ENCODE measurements at regions of chr1 and their contacts with region 1.

Region 1: GRCh38 chr1:145978854-145979759 is 14.6 kb downstream of the POLR3GL start:
- DNase-seq: peak; percentile 93
- ATAC-seq: peak; percentile 87
- H3K4me3 ChIP-seq: peak overlapping the region; percentile 16 to 52 (median 40)
- H3K4me3 Mint-ChIP-seq: no peak overlapping the region
- H3K27ac ChIP-seq: peak overlapping the region; percentile 96 to 97
- H3K27ac Mint-ChIP-seq: no peak overlapping the region
- H3K4me1 ChIP-seq: peaks cover 70 to 71% of the 10 kb centered on the region in 2 donors
- H3K4me1 Mint-ChIP-seq: peaks cover 30% of the 10 kb centered on the region
- H3K27me3 ChIP-seq: no peaks in the 10 kb centered on the region
- H3K27me3 Mint-ChIP-seq: no peaks in the 10 kb centered on the region
- CTCF ChIP-seq: no peak

Region 2: DNA sequence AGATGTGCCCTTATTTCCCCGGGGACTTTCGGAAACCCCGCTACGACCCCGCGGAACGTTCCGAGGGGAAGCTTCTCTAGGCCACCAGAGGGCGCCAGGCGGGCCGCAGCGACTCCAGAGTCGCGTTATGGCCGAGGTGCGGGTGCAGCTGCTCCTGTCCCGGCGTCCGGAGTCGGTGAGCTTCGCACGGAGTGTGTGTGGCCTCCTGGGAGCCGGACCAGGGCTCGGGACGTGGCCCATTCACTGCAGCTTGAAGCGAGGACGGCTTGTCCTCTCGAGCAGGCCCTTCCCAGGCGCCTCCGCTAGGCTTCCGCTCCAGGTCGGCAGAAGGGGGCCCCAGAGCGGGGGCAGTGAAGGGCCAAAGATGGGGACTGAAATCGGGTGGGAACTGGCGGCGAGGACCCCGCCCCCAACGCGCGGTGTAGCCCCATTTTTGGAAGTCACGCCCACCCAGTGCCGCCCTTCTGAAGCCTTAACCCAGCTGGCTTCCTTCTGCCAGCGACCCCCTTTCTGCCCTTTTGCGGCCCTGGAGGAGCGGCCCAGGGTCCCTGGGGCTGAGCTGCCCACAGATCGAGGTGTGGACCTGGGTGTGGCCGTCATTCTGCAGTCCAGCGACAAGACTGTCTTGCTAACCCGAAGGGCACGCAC is 133.5 kb before region 1 on chr1 and contains the start of gene NUDT17:
- CTCF ChIA-PET with region 1: interaction called, 68 read pairs
- POLR2A ChIA-PET with region 1: no interaction called
- intact Hi-C with region 1: loop called (anchors 1 kb)
- DNase-seq: peak; percentile 91
- ATAC-seq: peak; percentile 72
- H3K4me3 ChIP-seq: peak within 1 kb of the TSS; percentile 57 to 85 (median 70)
- H3K4me3 Mint-ChIP-seq: no peak within 1 kb of the TSS
- H3K27ac ChIP-seq: peak within 1 kb of the TSS; percentile 73 to 76
- H3K27ac Mint-ChIP-seq: no peak within 1 kb of the TSS
- H3K4me1 ChIP-seq: peaks cover 18 to 24% of the 10 kb centered on the region in 2 donors
- H3K4me1 Mint-ChIP-seq: peaks cover 7% of the 10 kb centered on the region
- H3K27me3 ChIP-seq: no peaks in the 10 kb centered on the region
- H3K27me3 Mint-ChIP-seq: no peaks in the 10 kb centered on the region
- CTCF ChIP-seq: peak; percentile 90
- total RNA-seq, gene NUDT17: 7.1 and 7.7 TPM in 2 replicates

Region 3: GRCh38 chr1:145918144-145918992 is 60.7 kb before region 1 on chr1 and contains the start of gene PEX11B:
- CTCF ChIA-PET with region 1: interaction called, 6 read pairs
- POLR2A ChIA-PET with region 1: interaction called, 10 read pairs
- intact Hi-C with region 1: no loop called
- DNase-seq: peak; percentile 97
- ATAC-seq: peak; percentile 90
- H3K4me3 ChIP-seq: peak within 1 kb of the TSS; percentile 69 to 98 (median 80)
- H3K4me3 Mint-ChIP-seq: peak within 1 kb of the TSS; percentile 92
- H3K27ac ChIP-seq: peak within 1 kb of the TSS; percentile 74 to 79
- H3K27ac Mint-ChIP-seq: peak within 1 kb of the TSS; percentile 95
- H3K4me1 ChIP-seq: peaks cover 15 to 24% of the 10 kb centered on the region in 2 donors
- H3K4me1 Mint-ChIP-seq: peaks cover 36% of the 10 kb centered on the region
- H3K27me3 ChIP-seq: no peaks in the 10 kb centered on the region
- H3K27me3 Mint-ChIP-seq: no peaks in the 10 kb centered on the region
- CTCF ChIP-seq: no peak
- total RNA-seq, gene PEX11B: 39.1 and 48.1 TPM in 2 replicates

Region 4: GRCh38 chr1:145963995-145964901 is 14.9 kb before region 1 on chr1 and contains the starts of genes ANKRD34A and POLR3GL:
- CTCF ChIA-PET with region 1: interaction called, 82 read pairs
- POLR2A ChIA-PET with region 1: interaction called, 17 read pairs
- intact Hi-C with region 1: loop called (anchors 1 kb)
- DNase-seq: peak; percentile 92
- ATAC-seq: peak; percentile 91
- H3K4me3 ChIP-seq: peak within 1 kb of the TSS; percentile 54 to 91 (median 87)
- H3K4me3 Mint-ChIP-seq: peak within 1 kb of the TSS; percentile 95
- H3K27ac ChIP-seq: peak within 1 kb of the TSS; percentile 59 to 85
- H3K27ac Mint-ChIP-seq: peak within 1 kb of the TSS; percentile 97
- H3K4me1 ChIP-seq: peaks cover 35 to 53% of the 10 kb centered on the region in 2 donors
- H3K4me1 Mint-ChIP-seq: peaks cover 61% of the 10 kb centered on the region
- H3K27me3 ChIP-seq: no peaks in the 10 kb centered on the region
- H3K27me3 Mint-ChIP-seq: no peaks in the 10 kb centered on the region
- CTCF ChIP-seq: no peak
- total RNA-seq, gene ANKRD34A: 1.8 and 2.8 TPM in 2 replicates
- total RNA-seq, gene POLR3GL: 26.3 and 33.3 TPM in 2 replicates

Region 5: DNA sequence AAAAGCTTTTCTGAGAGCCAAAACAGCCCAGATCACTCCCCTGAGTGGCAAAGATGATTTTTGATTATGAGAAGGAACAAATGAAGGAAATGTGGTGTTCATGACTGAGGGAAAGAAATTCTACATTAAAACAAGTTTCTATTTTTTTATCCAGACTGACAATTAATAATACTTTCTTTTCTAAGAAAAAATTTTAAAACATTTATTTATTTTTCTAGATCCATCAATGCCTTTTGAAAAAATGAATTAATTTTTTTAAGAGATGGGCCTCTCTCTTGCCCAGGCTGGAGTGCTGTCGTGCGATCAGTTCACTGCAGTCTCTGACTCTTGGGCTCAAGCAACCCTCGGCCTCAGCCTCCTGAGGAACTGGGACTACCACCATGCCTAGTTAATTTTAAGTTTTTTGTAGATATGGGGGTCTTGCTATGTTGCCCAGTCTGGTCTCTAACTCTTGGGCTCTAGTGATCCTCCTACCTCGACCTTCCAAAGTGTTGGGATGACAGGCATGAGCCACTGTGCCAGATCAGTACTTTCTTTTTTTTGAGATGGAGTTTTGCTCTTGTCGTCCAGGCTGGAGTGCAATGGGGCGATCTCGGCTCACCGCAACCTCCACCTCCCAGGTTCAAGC is 28.5 kb after region 1 on chr1:
- CTCF ChIA-PET with region 1: interaction called, 361 read pairs
- POLR2A ChIA-PET with region 1: interaction called, 42 read pairs
- intact Hi-C with region 1: loop called (anchors 1 kb)
- DNase-seq: no peak
- ATAC-seq: no peak
- H3K4me3 ChIP-seq: no peak overlapping the region
- H3K4me3 Mint-ChIP-seq: no peak overlapping the region
- H3K27ac ChIP-seq: peak overlapping the region in 1 of 2 donors; percentile 83
- H3K27ac Mint-ChIP-seq: peak overlapping the region; percentile 95
- H3K4me1 ChIP-seq: peaks cover 13 to 24% of the 10 kb centered on the region in 2 donors
- H3K4me1 Mint-ChIP-seq: peaks cover 22% of the 10 kb centered on the region
- H3K27me3 ChIP-seq: no peaks in the 10 kb centered on the region
- H3K27me3 Mint-ChIP-seq: no peaks in the 10 kb centered on the region
- CTCF ChIP-seq: peak; percentile 18

Region 6: DNA sequence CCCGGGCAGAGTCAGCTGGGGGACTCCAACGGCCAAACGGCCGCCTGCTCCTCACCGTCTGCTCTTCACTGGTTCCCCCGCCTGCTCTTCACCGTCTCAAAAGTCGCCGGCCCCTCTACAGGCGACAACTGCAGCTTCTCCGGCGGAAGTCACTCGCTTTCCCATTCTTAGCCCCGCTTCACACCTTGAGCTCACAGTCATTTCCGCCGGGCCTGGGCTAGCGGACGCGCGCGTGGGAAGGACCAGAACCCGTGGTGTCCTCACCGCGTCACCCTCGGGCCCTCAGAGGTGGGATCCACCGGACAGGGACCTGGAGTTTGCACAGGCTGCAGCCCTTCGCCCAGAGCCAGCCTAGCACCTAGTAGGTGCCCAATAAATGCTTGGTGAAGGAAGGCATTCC is 70.3 kb after region 1 on chr1:
- CTCF ChIA-PET with region 1: interaction called, 6 read pairs
- POLR2A ChIA-PET with region 1: interaction called, 12 read pairs
- intact Hi-C with region 1: no loop called
- DNase-seq: no peak
- ATAC-seq: no peak
- H3K4me3 ChIP-seq: no peak overlapping the region
- H3K4me3 Mint-ChIP-seq: no peak overlapping the region
- H3K27ac ChIP-seq: no peak overlapping the region
- H3K27ac Mint-ChIP-seq: peak overlapping the region; percentile 3
- H3K4me1 ChIP-seq: peaks cover 3 to 5% of the 10 kb centered on the region in 2 donors
- H3K4me1 Mint-ChIP-seq: peaks cover 20% of the 10 kb centered on the region
- H3K27me3 ChIP-seq: no peaks in the 10 kb centered on the region
- H3K27me3 Mint-ChIP-seq: no peaks in the 10 kb centered on the region
- CTCF ChIP-seq: no peak